MCF 10A (cell line): ENCODE measurements at regions of chr3 and their contacts with region 1.

Region 1: GRCh38 chr3:196502775-196503195 is 783 bp downstream of the RNF168 start:
- DNase-seq: peak; percentile 90
- H3K4me3 Mint-ChIP-seq: peak overlapping the region; percentile 99
- H3K27ac Mint-ChIP-seq: peak overlapping the region; percentile 75
- H3K4me1 Mint-ChIP-seq: peaks cover 20% of the 10 kb centered on the region
- H3K27me3 Mint-ChIP-seq: no peaks in the 10 kb centered on the region
- CTCF ChIP-seq: no peak

Region 2: DNA sequence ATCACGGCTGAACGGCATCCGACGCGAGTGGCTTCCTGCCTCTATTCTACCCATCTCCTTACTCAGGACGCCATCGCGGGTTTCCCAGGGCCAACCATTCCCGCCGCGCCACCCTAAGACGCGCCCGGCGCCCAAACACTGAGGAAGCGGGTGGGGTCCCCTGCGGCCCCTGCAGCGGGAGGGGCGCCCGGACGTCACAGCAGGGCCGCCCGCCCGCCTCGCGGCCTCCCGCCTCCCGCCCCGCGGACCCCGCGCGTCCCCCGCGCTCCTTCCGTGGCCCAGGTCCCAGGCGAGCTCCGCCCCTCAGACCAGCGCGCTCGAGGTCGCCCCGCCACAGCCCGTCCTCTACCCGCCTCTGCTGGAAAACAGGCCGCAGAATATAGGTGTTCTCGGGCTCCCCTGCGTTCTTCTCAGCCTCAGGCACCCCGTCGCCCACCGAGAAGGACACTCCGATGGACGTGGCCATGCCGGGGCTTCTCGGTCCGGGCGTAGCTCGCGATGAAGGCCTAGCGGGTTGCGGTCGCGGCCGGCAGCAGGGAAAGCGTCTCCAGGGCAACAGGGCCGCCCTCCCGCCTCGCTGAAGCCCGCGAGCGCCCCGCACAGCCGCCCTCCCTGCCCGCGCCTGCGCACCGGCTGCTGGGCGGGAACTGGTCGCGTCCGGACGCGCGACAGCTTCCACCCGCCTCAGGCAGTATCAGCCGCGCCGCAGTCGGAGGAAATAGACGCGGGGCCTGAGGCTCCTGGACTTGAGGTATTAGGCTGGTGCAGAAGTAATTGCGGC is 184.9 kb before region 1 on chr3 and contains the start of gene DYNLT2B:
- CTCF ChIA-PET with region 1: no interaction called
- POLR2A ChIA-PET with region 1: interaction called, 20 read pairs
- intact Hi-C with region 1: loop called (anchors 5 kb)
- DNase-seq: peak; percentile 87
- H3K4me3 Mint-ChIP-seq: peak within 1 kb of the TSS; percentile 94
- H3K27ac Mint-ChIP-seq: peak within 1 kb of the TSS; percentile 95
- H3K4me1 Mint-ChIP-seq: no peaks in the 10 kb centered on the region
- H3K27me3 Mint-ChIP-seq: no peaks in the 10 kb centered on the region
- CTCF ChIP-seq: no peak
- total RNA-seq, gene DYNLT2B: 22.3 and 23.5 TPM in 2 replicates

Region 3: DNA sequence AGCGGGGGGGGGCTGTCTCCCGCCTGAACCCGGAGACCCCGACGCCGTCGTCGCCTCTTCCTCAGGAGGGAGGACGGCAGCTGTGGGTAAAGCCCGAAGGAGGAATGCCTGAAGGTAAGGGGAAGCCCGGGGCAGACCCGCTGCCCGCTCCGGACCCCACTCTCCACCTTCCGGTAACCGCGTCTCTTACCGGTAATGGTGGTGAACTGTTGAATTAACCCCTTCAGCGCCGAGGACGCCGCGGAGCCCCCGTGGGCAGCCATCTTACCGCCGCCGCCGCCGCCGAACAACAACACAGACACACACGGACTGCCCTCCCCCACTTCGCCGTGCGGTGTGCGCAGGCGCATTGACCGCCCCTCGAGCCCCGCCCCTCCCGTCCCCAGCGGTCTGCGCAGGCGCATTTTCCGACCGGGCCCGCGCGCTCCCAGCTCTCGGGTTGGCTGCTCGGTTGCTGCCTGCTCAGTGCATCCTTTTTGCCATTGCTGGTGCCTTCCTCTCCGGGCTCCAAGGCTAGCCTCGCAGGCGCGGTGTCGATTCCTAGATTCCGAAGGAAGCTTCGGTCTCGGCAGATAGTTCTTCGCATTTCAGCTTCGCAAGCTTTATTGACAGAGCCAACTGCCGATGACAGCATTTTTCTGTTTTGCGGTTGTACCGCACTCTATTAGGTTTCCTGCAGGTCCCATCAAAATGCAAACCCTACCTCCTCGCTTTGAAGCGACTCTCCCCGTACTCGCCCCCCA is 70.5 kb before region 1 on chr3 and contains the start of gene UBXN7:
- CTCF ChIA-PET with region 1: interaction called, 4 read pairs
- POLR2A ChIA-PET with region 1: interaction called, 9 read pairs
- intact Hi-C with region 1: loop called (anchors 2 kb)
- DNase-seq: peak; percentile 94
- H3K4me3 Mint-ChIP-seq: peak within 1 kb of the TSS; percentile 89
- H3K27ac Mint-ChIP-seq: peak within 1 kb of the TSS; percentile 94
- H3K4me1 Mint-ChIP-seq: peaks cover 6% of the 10 kb centered on the region
- H3K27me3 Mint-ChIP-seq: no peaks in the 10 kb centered on the region
- CTCF ChIP-seq: no peak
- total RNA-seq, gene UBXN7: 64.7 and 71.6 TPM in 2 replicates

Region 4: GRCh38 chr3:196568246-196569002 is 65.6 kb after region 1 on chr3 and contains the starts of genes FBXO45 and WDR53:
- CTCF ChIA-PET with region 1: no interaction called
- POLR2A ChIA-PET with region 1: interaction called, 41 read pairs
- intact Hi-C with region 1: no loop called
- DNase-seq: peak; percentile 95
- H3K4me3 Mint-ChIP-seq: peak within 1 kb of the TSS; percentile 85
- H3K27ac Mint-ChIP-seq: peak within 1 kb of the TSS; percentile 87
- H3K4me1 Mint-ChIP-seq: peaks cover 20% of the 10 kb centered on the region
- H3K27me3 Mint-ChIP-seq: no peaks in the 10 kb centered on the region
- CTCF ChIP-seq: no peak
- total RNA-seq, gene FBXO45: 13.2 and 16.0 TPM in 2 replicates
- total RNA-seq, gene WDR53: 14.4 and 18.8 TPM in 2 replicates

Region 5: DNA sequence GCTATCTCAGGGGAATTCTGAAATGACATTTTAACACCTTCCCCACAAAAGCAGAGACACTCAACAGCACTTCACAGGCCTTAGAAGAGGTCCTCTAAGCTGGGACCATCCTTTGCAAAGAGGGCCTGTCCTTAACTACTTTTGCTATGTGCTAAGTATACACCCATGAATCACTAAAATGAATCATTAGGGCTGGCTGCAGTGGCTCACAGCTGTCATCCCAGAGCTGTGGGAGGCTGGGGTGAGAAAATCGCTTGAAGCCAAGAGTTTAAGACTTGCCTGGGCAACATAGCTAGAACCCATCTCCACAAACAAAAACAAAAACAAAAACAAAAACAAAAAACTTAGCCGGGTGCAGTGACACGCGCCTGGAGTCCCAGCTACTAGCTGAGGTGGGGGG is 580.7 kb after region 1 on chr3:
- CTCF ChIA-PET with region 1: no interaction called
- POLR2A ChIA-PET with region 1: no interaction called
- intact Hi-C with region 1: no loop called
- DNase-seq: peak; percentile 71
- H3K4me3 Mint-ChIP-seq: no peak overlapping the region
- H3K27ac Mint-ChIP-seq: peak overlapping the region; percentile 87
- H3K4me1 Mint-ChIP-seq: peaks cover 15% of the 10 kb centered on the region
- H3K27me3 Mint-ChIP-seq: no peaks in the 10 kb centered on the region
- CTCF ChIP-seq: no peak